ENCODE measurements at regions of chr7 and their contacts with region 1.

Region 1: DNA sequence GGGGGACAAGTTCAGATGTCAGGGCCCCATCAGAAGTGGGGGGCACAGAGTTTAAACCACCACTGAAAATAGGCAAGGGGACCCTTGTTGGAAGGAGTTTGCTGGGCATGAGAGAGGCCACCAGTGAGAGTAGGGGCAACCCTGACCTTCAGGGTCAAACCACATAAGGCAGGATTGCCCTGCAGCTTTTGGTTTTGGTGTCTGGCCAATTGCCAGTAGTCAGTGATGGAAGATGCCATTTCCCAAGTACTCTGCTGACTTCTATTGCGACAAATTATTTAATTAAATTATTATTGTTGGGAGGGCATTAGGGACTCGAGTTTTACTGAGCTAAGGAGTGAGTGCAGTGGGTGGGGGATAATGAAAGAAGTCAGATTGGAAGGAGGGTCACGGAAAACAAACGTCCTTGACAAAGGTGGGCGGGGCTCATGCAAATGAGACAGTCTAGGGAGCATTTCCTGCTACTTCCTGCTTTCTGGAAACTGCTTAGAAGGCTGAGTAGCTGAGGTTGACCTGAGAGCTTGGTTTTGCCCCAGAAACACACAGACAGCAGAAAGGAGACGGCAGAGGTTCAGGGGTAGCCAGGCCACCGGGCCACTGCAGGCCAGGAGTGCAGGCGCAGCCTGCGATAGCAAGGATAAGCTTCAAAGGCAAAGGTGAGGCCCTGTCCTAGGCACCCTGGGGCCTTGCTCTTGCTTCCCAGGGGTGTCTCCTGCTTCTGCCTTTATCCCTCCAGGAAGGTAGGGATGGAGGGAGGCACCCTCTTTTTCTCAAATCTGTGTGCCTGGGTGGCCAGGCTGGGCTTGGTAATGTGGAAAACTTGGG is 74.1 kb upstream of the ANLN start:
- DNase-seq: no peak
- ATAC-seq: no peak
- H3K4me3 Mint-ChIP-seq: no peak overlapping the region
- H3K27ac Mint-ChIP-seq: no peak overlapping the region
- H3K4me1 Mint-ChIP-seq: no peaks in the 10 kb centered on the region
- H3K27me3 Mint-ChIP-seq: peaks cover 2% of the 10 kb centered on the region

Region 2: GRCh38 chr7:35985126-35985754 is 330.3 kb before region 1 on chr7:
- CTCF ChIA-PET with region 1: interaction called, 25 read pairs
- POLR2A ChIA-PET with region 1: no interaction called
- DNase-seq: peak; percentile 76
- ATAC-seq: peak; percentile 97
- H3K4me3 Mint-ChIP-seq: no peak overlapping the region
- H3K27ac Mint-ChIP-seq: no peak overlapping the region
- H3K4me1 Mint-ChIP-seq: no peaks in the 10 kb centered on the region
- H3K27me3 Mint-ChIP-seq: peaks cover 2% of the 10 kb centered on the region

Region 3: DNA sequence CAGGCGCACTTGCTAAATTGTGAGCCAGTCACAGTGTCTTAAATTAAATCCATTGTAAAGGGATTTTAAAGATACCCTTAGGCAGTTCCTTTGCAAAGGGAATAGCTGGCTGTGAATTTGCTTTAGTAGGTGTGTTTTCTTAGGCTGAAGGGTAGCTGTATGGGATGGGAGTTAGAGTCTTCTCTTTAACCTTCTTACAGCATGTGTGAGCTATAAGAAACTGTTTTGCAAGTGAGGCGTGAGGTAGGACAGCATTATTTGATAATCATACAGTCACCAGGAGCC is 157.3 kb before region 1 on chr7:
- CTCF ChIA-PET with region 1: no interaction called
- POLR2A ChIA-PET with region 1: no interaction called
- DNase-seq: no peak
- ATAC-seq: no peak
- H3K4me3 Mint-ChIP-seq: no peak overlapping the region
- H3K27ac Mint-ChIP-seq: no peak overlapping the region
- H3K4me1 Mint-ChIP-seq: no peaks in the 10 kb centered on the region
- H3K27me3 Mint-ChIP-seq: peaks cover 2% of the 10 kb centered on the region

Region 4: DNA sequence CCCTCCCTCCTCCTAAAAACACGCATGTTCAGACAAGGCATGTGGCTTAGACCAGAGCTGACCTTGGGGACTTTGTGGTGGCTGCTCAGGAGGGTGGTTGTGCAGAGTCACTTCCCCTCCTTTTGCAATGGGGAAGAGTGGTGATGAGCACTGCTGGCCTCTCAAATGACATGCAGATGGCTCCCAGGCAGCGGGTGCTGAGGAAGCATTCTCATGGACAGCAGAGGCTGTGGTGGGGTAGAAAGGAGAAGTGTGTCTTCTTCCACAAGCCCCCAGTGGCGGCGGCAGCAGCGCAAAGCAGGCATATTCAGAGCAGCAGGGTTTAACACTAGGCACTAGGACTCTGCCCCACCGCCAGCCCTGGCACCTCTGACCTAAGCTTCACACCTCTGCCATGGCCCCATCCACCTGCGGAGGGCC is 31.8 kb before region 1 on chr7:
- CTCF ChIA-PET with region 1: interaction called, 11 read pairs
- POLR2A ChIA-PET with region 1: no interaction called
- DNase-seq: peak; percentile 39
- ATAC-seq: no peak
- H3K4me3 Mint-ChIP-seq: no peak overlapping the region
- H3K27ac Mint-ChIP-seq: peak overlapping the region; percentile 74
- H3K4me1 Mint-ChIP-seq: peaks cover 60% of the 10 kb centered on the region
- H3K27me3 Mint-ChIP-seq: peaks cover 4% of the 10 kb centered on the region

Region 5: GRCh38 chr7:36301914-36302771 is 13.4 kb before region 1 on chr7:
- CTCF ChIA-PET with region 1: interaction called, 17 read pairs
- POLR2A ChIA-PET with region 1: no interaction called
- DNase-seq: no peak
- ATAC-seq: no peak
- H3K4me3 Mint-ChIP-seq: no peak overlapping the region
- H3K27ac Mint-ChIP-seq: no peak overlapping the region
- H3K4me1 Mint-ChIP-seq: no peaks in the 10 kb centered on the region
- H3K27me3 Mint-ChIP-seq: no peaks in the 10 kb centered on the region

Region 6: GRCh38 chr7:36336390-36336789 is 20.9 kb after region 1 on chr7:
- CTCF ChIA-PET with region 1: interaction called, 15 read pairs
- POLR2A ChIA-PET with region 1: no interaction called
- DNase-seq: no peak
- ATAC-seq: no peak
- H3K4me3 Mint-ChIP-seq: no peak overlapping the region
- H3K27ac Mint-ChIP-seq: no peak overlapping the region
- H3K4me1 Mint-ChIP-seq: no peaks in the 10 kb centered on the region
- H3K27me3 Mint-ChIP-seq: peaks cover 3% of the 10 kb centered on the region

Region 7: GRCh38 chr7:36360244-36360643 is 44.7 kb after region 1 on chr7:
- CTCF ChIA-PET with region 1: interaction called, 15 read pairs
- POLR2A ChIA-PET with region 1: no interaction called
- DNase-seq: no peak
- ATAC-seq: no peak
- H3K4me3 Mint-ChIP-seq: no peak overlapping the region
- H3K27ac Mint-ChIP-seq: no peak overlapping the region
- H3K4me1 Mint-ChIP-seq: no peaks in the 10 kb centered on the region
- H3K27me3 Mint-ChIP-seq: peaks cover 7% of the 10 kb centered on the region